Esophagus squamous epithelium (tissue), 5 donors: ENCODE measurements at regions of chr1 and their contacts with region 1.

Region 1: DNA sequence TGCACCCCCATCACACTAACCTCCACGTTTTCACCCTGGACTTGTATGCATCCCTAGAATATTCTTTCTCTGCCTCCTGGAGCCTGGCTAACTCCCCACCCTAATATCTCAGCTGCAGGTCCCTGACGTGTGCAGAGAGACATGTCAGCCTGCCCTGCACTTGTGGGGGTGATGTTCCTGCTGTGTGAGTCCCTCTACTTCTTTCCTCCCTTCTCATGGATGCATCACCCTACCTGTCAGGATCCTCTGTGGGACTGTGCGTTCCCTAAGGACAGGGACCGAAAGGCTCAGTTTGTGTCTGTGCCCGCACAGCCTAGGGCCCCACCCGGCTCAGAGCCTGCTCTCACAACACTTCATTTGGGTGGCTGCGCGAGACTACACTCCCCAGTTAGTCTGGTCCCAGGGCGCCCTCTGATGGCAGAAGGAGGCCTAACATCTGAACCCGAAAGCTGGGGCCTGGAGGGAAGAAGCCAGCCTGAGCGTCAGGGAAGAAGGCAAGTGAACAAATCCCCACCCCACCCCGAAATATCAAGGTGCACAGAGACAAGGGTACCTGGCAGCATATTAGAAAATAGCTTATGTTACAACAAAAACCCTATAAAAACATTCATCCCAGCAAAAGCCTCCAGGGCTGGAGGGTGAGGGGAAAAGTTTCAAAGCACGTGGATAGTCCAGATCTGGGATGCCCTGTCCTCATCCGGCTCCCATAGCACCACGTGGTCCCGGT is 3.7 kb downstream of the CD52 start:
- DNase-seq: peak; percentile 68
- H3K4me3 ChIP-seq: no peak overlapping the region
- H3K27ac ChIP-seq: peak overlapping the region in 3 of 4 donors; percentile 0 to 21 (median 17)
- H3K4me1 ChIP-seq: peaks cover 0 to 34% (median 10%) of the 10 kb centered on the region in 3 donors
- H3K27me3 ChIP-seq: peaks cover 0 to 4% (median 0%) of the 10 kb centered on the region in 4 donors
- CTCF ChIP-seq: peak; percentile 80 to 97 (median 93)
- POLR2A ChIP-seq: no peak

Region 2: GRCh38 chr1:26169669-26170471 is 151.6 kb before region 1 on chr1 and contains the start of gene ZNF593:
- intact Hi-C with region 1: loop called (anchors 10 kb)
- DNase-seq: peak; percentile 26
- H3K4me3 ChIP-seq: peak within 1 kb of the TSS; percentile 79 to 98 (median 90)
- H3K27ac ChIP-seq: peak within 1 kb of the TSS; percentile 86 to 92 (median 88)
- H3K4me1 ChIP-seq: peaks cover 9 to 26% (median 17%) of the 10 kb centered on the region in 3 donors
- H3K27me3 ChIP-seq: no peaks in the 10 kb centered on the region
- CTCF ChIP-seq: peak; percentile 79 to 98 (median 92)
- POLR2A ChIP-seq: peak in 2 of 4 donors; percentile 33 to 65
- total RNA-seq, gene ZNF593: 19.2 to 45.6 (median 24.7) TPM

Region 3: DNA sequence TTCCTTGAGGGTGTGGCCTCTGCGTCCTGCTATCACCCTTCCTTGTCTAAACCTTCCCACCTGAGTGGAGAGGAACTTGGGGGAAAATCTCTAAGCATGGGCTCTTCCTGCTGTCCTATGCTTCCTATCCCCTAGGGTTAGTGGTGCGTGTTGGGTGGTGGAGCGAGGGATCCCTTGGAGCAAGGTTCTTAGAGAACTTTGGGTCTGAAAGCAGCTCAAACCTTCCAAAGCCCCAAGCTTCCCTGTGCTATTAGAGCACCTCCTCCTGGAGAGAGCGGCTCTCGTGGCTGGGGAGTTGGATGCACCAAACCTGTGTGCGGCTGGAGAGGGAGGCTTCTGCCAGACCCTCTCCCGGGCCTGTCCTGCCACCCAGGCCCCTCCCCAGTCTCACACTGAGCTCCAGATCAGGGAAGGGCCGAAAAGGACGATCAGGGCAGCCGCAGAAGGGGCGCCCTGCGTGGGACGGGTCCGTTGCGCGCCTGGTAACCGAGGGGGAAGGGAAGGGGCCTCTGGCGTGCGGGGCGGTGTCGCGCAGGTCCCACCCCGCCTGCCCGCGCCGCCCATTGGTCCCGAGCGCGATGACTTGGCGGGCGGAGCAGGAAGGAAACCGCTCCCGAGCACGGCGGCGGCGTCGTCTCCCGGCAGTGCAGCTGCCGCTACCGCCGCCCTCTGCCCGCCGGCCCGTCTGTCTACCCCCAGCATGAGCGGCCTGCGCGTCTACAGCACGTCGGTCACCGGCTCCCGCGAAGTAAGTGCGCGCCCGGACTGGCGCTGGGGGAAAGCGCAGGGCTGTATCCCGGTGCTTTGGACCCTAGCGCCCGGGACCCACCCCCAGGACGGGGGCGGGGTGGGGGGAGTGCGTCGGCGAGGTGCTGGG is 41.8 kb before region 1 on chr1 and contains the start of gene SH3BGRL3:
- intact Hi-C with region 1: loop called (anchors 5 kb)
- DNase-seq: no peak
- H3K4me3 ChIP-seq: peak within 1 kb of the TSS; percentile 80 to 99 (median 94)
- H3K27ac ChIP-seq: peak within 1 kb of the TSS; percentile 99 to 100 (median 99)
- H3K4me1 ChIP-seq: peaks cover 65 to 96% (median 73%) of the 10 kb centered on the region in 3 donors
- H3K27me3 ChIP-seq: no peaks in the 10 kb centered on the region
- CTCF ChIP-seq: peak in 4 of 6 experiments; percentile 15 to 53 (median 27)
- POLR2A ChIP-seq: peak in 3 of 4 donors; percentile 80 to 98 (median 96)
- total RNA-seq, gene SH3BGRL3: 76.9 to 163 (median 106) TPM